Kidney (tissue), 22 donors: ENCODE measurements at regions of chr2 and their contacts with region 1.

Region 1: GRCh38 chr2:158745044-158745865 is 49.9 kb upstream of the DAPL1 start:
- DNase-seq: peak in 4 of 5 donors; percentile 73 to 91 (median 85)
- H3K4me3 ChIP-seq: no peak overlapping the region
- H3K27ac ChIP-seq: no peak overlapping the region
- H3K4me1 ChIP-seq: peaks cover 0 to 12% (median 7%) of the 10 kb centered on the region in 3 donors
- H3K27me3 ChIP-seq: no peaks in the 10 kb centered on the region
- CTCF ChIP-seq: peak; percentile 63

Region 2: GRCh38 chr2:158464426-158465281 is 280.6 kb before region 1 on chr2:
- intact Hi-C with region 1: loop called (anchors 10 kb)
- DNase-seq: no peak
- H3K4me3 ChIP-seq: no peak overlapping the region
- H3K27ac ChIP-seq: no peak overlapping the region
- H3K4me1 ChIP-seq: peaks cover 0 to 16% (median 6%) of the 10 kb centered on the region in 3 donors
- H3K27me3 ChIP-seq: no peaks in the 10 kb centered on the region
- CTCF ChIP-seq: peak; percentile 42

Region 3: GRCh38 chr2:158578703-158579330 is 166.4 kb before region 1 on chr2:
- intact Hi-C with region 1: no loop called
- DNase-seq: no peak
- H3K4me3 ChIP-seq: no peak overlapping the region
- H3K27ac ChIP-seq: no peak overlapping the region
- H3K4me1 ChIP-seq: no peaks in the 10 kb centered on the region
- H3K27me3 ChIP-seq: no peaks in the 10 kb centered on the region
- CTCF ChIP-seq: no peak